ENCODE measurements at regions of chr11 and their contacts with region 1.

Region 1: DNA sequence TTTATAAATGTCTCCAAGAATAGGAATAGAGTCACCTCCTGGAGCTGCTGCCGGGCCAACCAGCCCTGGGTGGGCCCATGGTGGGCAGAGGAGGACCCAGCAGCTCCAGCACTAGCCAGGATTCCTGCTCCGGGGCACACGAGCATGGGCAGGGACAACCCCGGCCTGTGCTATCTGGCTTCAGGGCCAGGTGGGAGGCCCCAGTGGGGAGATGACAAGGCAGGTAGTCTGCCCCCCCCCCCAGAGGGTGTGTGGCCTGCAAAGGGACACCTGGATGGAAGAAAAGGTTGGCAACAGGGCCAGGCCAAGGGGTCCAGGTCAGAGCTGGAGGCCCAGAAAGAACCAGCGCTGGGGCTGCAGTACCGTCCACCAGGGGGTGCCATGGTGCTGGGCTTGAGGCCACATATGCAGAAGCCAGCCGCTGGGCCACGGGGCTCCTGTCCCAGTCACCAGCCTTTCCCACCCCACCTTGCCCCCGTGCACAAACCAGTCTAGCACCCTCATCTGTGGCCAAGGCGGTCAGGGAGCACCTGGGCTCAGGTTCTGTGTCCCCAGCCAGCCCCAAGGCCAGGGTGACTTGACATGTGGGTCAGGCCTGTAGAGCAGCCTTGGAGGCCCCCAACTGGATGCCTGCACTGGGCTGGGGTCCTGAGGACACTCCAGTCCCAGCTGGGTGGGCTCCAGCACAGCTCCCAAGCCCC is 3.5 kb downstream of the TSPAN32 start:
- DNase-seq: peak; percentile 61 to 96 (median 84)

Region 2: GRCh38 chr11:2196970-2197770 is 108.1 kb before region 1 on chr11:
- intact Hi-C with region 1: loop called (anchors 5 kb)
- DNase-seq: peak; percentile 48 to 96 (median 75)

Region 3: GRCh38 chr11:2400069-2400760 is 94.9 kb after region 1 on chr11 and contains the start of gene TSSC4:
- intact Hi-C with region 1: loop called (anchors 5 kb)
- DNase-seq: peak; percentile 98 to 100 (median 99)

Region 4: DNA sequence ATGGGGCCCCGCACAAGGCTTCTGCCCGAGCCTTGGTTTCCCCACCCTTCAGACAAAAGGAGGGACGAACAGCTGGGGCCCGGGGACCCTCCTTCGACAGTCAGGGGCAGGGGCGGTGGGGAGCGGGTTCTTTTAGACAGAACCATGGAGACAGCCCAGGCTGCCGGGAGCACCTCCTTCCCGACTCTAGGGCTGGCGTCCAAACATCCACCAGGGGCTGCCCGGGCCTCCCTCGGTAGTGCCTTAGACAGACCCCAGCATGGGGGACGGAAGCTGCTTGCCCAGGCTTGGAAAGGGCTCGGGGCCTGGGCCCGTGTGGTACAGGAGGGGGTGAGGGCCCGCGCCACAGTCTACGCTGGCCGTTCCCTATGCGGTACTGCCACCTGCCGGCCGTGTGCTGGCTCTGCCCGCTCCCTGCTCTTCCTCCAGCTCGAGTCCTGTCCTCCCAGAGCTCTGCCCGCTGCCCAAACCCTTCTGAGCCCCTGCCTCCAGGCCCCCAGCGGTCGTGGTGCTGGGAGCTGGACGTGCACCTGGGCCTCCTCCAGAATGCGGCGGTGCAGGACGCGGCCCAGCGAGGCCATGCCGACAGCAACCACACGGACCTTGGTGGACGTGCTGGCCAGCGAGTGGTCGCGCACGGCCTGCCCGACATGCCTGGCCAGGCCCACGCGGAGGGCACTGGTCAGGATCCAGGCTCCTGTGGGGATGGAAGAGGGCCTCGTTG is 115.4 kb after region 1 on chr11:
- intact Hi-C with region 1: loop called (anchors 1 kb)
- DNase-seq: peak; percentile 42 to 96 (median 74)

Region 5: GRCh38 chr11:2532704-2533586 is 227.7 kb after region 1 on chr11:
- intact Hi-C with region 1: loop called (anchors 1 kb)
- DNase-seq: peak; percentile 81 to 99 (median 92)

Measured in posterior cingulate gyrus (tissue), 11 donors.